ENCODE measurements at regions of chr16 and their contacts with region 1.

Region 1: GRCh38 chr16:68512183-68512582 is 26.9 kb upstream of the ZFP90 start:
- DNase-seq: no peak
- H3K4me3 ChIP-seq: no peak overlapping the region
- H3K27ac ChIP-seq: no peak overlapping the region
- H3K4me1 ChIP-seq: peaks cover 4% of the 10 kb centered on the region
- H3K27me3 ChIP-seq: peaks cover 3% of the 10 kb centered on the region
- CTCF ChIP-seq: no peak

Region 2: GRCh38 chr16:68420366-68420951 is 91.7 kb before region 1 on chr16:
- CTCF ChIA-PET with region 1: no interaction called
- dilution Hi-C with region 1: loop called (anchors 5 kb)
- in situ Hi-C with region 1: no loop called
- intact Hi-C with region 1: no loop called
- DNase-seq: no peak
- H3K4me3 ChIP-seq: no peak overlapping the region
- H3K27ac ChIP-seq: no peak overlapping the region
- H3K4me1 ChIP-seq: peaks cover 8% of the 10 kb centered on the region
- H3K27me3 ChIP-seq: no peaks in the 10 kb centered on the region
- CTCF ChIP-seq: no peak

Region 3: DNA sequence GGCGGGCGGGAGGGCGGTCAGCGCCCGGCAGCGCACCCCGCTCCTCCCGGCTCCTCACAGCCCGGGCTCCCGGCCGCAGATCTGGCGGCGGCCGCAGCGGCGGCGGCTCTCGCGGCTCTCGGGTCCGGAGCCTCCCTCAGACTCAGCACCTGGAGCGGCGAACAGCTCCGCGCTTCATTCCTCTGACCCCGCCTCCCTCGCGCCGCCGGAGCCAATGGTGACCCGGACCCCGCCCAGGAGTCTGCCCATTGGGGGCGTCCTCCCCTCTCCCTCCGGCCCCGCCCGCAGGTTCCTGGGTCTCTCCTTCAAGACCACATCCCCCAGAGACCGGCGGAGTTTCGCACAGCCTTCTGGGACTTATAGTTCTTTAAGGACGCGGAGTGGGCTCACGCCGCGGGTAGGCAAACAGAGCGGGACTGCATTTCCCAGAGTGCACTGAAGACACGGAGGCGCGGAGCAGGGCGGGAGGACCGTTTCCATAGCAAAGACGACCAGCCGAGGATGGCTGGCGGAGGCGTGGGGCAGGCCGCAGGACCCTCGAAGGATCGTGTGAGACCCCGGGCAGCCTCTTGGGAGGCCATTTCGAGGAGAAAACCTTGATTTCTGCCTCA is 63.7 kb before region 1 on chr16 and contains the start of gene SMPD3:
- CTCF ChIA-PET with region 1: no interaction called
- dilution Hi-C with region 1: no loop called
- in situ Hi-C with region 1: loop called (anchors 5 kb)
- intact Hi-C with region 1: loop called (anchors 1 kb)
- DNase-seq: peak; percentile 98
- H3K4me3 ChIP-seq: peak within 1 kb of the TSS; percentile 36 to 51 (median 43)
- H3K27ac ChIP-seq: no peak within 1 kb of the TSS
- H3K4me1 ChIP-seq: peaks cover 7% of the 10 kb centered on the region
- H3K27me3 ChIP-seq: peaks cover 11% of the 10 kb centered on the region
- CTCF ChIP-seq: no peak
- total RNA-seq, gene SMPD3: not detected

Region 4: GRCh38 chr16:68490829-68491575 is 21.2 kb before region 1 on chr16:
- CTCF ChIA-PET with region 1: no interaction called
- dilution Hi-C with region 1: no loop called
- in situ Hi-C with region 1: no loop called
- intact Hi-C with region 1: no loop called
- DNase-seq: peak; percentile 91
- H3K4me3 ChIP-seq: no peak overlapping the region
- H3K27ac ChIP-seq: peak overlapping the region; percentile 4
- H3K4me1 ChIP-seq: peaks cover 13% of the 10 kb centered on the region
- H3K27me3 ChIP-seq: no peaks in the 10 kb centered on the region
- CTCF ChIP-seq: no peak

Measured in mammary epithelial cell (primary cell).